ENCODE measurements at regions of chr15 and their contacts with region 1.

Region 1: DNA sequence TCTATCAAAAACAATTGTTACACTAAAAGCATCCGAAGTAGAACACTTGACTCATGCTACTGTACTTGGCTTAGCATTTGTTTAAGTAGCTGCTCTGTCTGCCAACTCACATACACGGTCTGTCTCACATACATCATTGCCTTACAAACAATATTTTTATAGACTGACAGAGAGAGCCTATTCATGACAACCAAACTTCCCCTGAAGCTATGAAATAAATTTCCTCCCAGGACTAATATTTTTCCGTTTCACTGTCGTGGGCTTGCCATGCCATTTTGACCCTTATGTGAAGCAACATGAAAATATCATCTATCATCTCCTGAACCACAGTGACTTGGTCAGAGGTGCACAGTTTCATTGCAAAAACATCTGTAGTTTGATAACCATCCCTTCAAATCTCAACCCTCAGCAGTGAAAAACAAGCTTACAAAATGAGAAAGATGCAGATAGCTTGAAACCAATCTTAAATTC is 66.5 kb upstream of the PYGO1 start:
- DNase-seq: no peak
- CTCF ChIP-seq: no peak

Region 2: DNA sequence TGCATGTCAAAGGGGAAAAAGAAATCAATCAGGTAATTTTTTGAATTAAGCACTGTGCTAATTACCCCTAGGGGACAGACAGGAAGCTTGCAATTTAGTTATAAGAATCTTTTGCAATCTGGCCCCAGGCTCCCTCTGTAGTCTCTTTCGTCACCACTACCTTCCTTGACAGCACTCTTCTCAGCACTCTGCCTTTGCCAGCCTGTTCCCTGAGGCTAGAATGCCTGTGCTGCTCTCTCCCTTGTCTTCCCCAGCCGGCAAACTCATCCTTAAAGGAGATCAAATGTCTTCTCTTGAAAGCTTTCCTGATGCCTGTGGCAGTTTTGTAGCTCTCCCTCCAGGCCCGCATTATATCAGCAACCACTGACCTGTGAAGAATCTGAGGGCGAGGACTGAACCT is 120.7 kb after region 1 on chr15:
- in situ Hi-C with region 1: loop called (anchors 10 kb)
- DNase-seq: no peak
- CTCF ChIP-seq: no peak

Region 3: GRCh38 chr15:55829826-55830225 is 175.2 kb after region 1 on chr15:
- in situ Hi-C with region 1: loop called (anchors 10 kb)
- DNase-seq: no peak
- CTCF ChIP-seq: no peak

Region 4: DNA sequence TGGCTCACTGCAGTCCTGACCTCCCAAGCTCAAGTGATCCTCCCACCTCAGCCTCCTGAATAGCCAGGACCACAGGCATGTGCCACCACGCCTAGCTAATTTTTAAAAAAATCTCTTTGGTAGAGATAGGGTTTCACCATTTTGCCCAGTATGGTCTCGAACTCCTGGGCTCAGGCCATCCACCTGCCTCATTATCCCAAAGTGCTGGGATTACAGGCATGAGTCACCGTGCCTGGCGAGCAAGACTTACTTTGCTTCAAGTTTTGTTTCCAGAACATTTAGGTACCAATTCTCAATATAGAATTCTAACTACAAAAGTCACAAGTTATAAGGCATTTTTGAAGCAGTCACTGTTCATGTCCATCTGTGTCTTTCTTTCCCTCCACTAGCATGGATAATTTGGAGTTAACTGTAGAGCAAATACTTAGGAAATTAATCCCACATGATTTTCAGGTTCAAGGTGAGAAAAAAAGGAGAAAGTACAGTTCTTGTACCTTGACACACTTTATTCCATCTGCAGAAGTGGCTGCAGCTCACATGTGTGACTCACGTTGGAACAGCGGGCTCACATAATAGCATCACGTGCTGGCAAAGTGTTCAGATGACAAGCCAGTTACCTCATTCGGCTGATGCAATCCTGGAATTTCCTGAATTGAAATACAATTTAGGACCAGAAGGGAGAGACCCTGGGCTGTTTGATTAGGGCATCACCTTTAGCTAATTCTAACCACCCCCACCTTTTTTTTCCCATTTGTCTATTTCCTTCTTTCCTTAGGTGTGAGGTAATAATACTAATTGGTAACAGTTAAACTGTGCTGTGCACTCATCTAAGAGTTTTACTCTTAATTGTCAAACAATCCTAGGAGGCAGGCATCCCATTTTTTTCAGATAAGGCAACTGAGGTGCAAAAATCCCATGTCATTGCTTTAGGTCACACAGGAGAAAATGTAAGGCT is 385.8 kb after region 1 on chr15:
- in situ Hi-C with region 1: no loop called
- DNase-seq: no peak
- CTCF ChIP-seq: no peak

Measured in GM13976 (cell line).